Activated naive CD4-positive, alpha-beta T cell treated with anti-CD3 and anti-CD28 coated beads for 36 hours (primary cell): ENCODE measurements at regions of chr9 and their contacts with region 1.

Region 1: DNA sequence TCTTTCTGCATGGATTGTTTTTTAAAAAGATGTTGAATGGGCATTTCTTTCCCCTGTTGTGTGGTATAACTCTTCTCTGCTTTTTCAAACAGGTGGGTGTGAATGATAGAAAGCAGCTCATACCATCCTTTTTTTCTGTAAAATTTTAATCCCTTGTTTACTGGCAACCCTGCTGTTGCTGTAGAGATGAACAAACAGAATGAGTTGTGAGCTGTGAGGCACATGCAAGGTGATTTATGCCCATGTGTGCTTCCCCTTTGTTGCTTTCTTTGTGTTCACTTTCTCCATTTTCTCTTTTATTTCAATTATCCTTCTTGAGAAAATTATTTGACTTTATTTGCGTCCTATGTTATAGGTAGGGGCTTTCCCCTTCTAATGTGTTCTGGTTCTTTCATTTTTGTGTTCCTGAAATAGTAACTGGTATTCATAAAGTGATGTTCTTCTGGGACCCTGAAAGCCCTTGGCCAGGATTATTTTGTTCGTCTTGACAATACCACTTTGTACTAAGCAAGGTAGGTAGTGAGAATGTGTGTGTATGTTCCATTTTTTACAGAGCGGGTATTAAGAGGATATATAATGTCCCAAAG is 79.9 kb downstream of the AOPEP start:
- DNase-seq: no peak
- H3K4me3 Mint-ChIP-seq: no peak overlapping the region
- H3K27ac Mint-ChIP-seq: no peak overlapping the region
- H3K4me1 Mint-ChIP-seq: peaks cover 15% of the 10 kb centered on the region
- H3K27me3 Mint-ChIP-seq: no peaks in the 10 kb centered on the region

Region 2: DNA sequence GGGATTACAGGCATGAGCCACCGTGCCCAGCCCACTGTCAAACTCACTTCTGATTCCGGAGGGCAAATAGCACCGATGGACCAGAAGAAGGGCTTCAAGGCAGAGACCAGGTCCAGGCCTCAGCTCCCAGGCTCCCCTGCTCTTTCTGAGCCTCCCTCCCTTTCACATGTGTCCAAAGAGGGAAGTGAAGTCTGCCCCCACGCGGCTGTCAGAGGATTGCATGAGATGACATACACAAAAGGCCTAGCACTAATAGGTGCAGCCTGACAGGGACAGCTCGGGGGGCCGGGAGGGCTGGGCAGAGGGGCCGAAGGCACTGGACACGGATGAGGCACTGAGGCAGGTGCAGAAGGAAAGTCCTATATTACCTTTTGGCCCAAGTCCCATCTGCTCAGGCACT is 183.1 kb before region 1 on chr9:
- CTCF ChIA-PET with region 1: no interaction called
- intact Hi-C with region 1: no loop called
- DNase-seq: peak; percentile 61
- H3K4me3 Mint-ChIP-seq: no peak overlapping the region
- H3K27ac Mint-ChIP-seq: no peak overlapping the region
- H3K4me1 Mint-ChIP-seq: peaks cover 10% of the 10 kb centered on the region
- H3K27me3 Mint-ChIP-seq: no peaks in the 10 kb centered on the region

Region 3: DNA sequence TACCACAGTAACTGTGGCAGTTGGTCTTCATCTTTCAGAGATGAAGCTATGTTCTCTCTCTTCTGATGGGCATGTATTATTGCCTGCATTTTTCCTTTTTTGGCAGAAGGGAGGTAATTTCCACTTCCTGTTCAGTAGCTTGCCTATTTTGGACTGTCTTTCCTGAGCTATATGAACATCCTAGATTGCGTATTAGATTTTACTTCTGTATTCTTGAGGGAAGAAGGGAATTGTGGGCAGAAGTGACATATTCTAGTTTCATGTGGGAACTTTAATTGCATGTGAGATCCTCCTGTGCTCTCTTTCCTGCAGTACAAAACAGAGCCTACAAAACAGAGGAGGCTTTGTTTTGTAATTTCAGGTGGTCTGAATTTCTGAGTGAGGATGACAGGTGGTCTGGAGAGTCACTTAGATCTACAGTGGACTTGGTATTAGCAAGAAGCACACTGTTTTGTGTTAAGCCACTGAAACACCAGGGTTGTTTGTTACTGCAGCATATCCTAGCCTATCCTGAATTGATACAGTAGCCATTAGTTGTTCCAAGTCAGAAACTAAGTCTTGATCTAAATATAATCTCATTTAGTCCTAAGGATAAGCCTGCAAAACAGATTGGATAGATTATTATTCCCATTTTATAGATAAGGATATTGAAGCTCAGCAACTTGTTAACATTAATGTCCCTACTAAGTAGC is 11.8 kb before region 1 on chr9:
- CTCF ChIA-PET with region 1: no interaction called
- intact Hi-C with region 1: loop called (anchors 1 kb)
- DNase-seq: no peak
- H3K4me3 Mint-ChIP-seq: no peak overlapping the region
- H3K27ac Mint-ChIP-seq: no peak overlapping the region
- H3K4me1 Mint-ChIP-seq: no peaks in the 10 kb centered on the region
- H3K27me3 Mint-ChIP-seq: no peaks in the 10 kb centered on the region